OCI-LY7 (cell line): ENCODE measurements at regions of chr11 and their contacts with region 1.

Region 1: GRCh38 chr11:107565219-107565937 is at the start of gene ALKBH8:
- DNase-seq: peak; percentile 80
- H3K4me3 ChIP-seq: peak within 1 kb of the TSS; percentile 76
- H3K27ac ChIP-seq: peak within 1 kb of the TSS; percentile 86
- H3K4me1 ChIP-seq: peaks cover 49% of the 10 kb centered on the region
- CTCF ChIP-seq: no peak
- total RNA-seq, gene ALKBH8: 12.2 and 21.3 TPM in 2 replicates

Region 2: GRCh38 chr11:107549253-107549953 is 16.0 kb before region 1 on chr11:
- CTCF ChIA-PET with region 1: interaction called, 7 read pairs
- POLR2A ChIA-PET with region 1: interaction called, 32 read pairs
- intact Hi-C with region 1: no loop called
- DNase-seq: peak; percentile 61
- H3K4me3 ChIP-seq: no peak overlapping the region
- H3K27ac ChIP-seq: no peak overlapping the region
- H3K4me1 ChIP-seq: no peaks in the 10 kb centered on the region
- CTCF ChIP-seq: peak; percentile 96

Region 3: GRCh38 chr11:107689317-107690202 is 124.2 kb after region 1 on chr11:
- CTCF ChIA-PET with region 1: interaction called, 11 read pairs
- POLR2A ChIA-PET with region 1: interaction called, 6 read pairs
- intact Hi-C with region 1: loop called (anchors 1 kb)
- DNase-seq: peak; percentile 61
- H3K4me3 ChIP-seq: no peak overlapping the region
- H3K27ac ChIP-seq: no peak overlapping the region
- H3K4me1 ChIP-seq: no peaks in the 10 kb centered on the region
- CTCF ChIP-seq: peak; percentile 85

Region 4: GRCh38 chr11:107799218-107799859 is 234.0 kb after region 1 on chr11:
- CTCF ChIA-PET with region 1: no interaction called
- POLR2A ChIA-PET with region 1: no interaction called
- intact Hi-C with region 1: no loop called
- DNase-seq: peak; percentile 71
- H3K4me3 ChIP-seq: no peak overlapping the region
- H3K27ac ChIP-seq: no peak overlapping the region
- H3K4me1 ChIP-seq: no peaks in the 10 kb centered on the region
- CTCF ChIP-seq: peak; percentile 94

Region 5: DNA sequence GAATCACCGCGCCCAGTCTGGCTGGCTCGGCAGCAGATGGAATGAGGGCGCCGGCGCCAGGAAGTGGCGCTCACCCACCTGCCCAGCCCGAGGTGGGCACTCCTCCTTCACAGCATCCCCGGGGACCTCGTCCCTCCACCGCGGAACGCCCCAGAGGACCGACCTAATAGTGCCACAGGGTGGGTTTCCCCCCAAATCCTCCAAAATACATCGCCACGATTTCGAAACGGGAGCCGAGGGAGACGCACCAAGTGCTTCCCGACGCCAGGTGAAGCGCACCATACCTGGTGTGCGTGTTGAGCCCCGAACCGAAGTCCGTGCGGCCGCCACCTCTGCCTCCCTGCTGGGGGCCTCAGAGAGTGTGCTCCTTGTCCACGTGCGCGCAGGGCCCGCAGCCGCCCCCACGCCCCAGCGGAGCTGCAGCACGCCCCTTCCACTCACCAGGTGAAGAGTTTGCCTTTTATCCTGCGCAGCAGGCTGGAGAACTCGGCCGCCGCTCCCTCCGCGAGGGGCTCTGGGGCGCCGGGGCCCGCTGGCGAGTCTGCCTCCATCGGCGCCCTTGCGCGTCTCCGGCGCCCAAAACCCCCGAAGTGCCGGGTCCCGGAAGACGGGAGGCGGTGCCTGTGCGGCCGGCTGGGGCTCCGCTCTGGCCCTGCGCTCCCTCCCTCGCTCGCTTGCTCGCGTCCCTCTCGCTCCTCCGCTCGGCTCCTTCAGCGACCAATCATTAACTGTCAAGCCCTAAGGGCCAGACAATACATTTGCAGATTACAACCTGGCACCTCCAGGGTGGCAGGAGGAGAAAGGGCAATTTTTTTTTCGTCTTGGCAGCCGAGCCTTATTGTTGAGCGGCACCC is 293.1 kb after region 1 on chr11 and contains the start of gene SLC35F2:
- CTCF ChIA-PET with region 1: no interaction called
- POLR2A ChIA-PET with region 1: interaction called, 3 read pairs
- intact Hi-C with region 1: loop called (anchors 2 kb)
- DNase-seq: peak; percentile 91
- H3K4me3 ChIP-seq: peak within 1 kb of the TSS; percentile 85
- H3K27ac ChIP-seq: peak within 1 kb of the TSS; percentile 62
- H3K4me1 ChIP-seq: peaks cover 18% of the 10 kb centered on the region
- CTCF ChIP-seq: peak; percentile 54
- total RNA-seq, gene SLC35F2: 20.9 and 23.3 TPM in 2 replicates

Region 6: DNA sequence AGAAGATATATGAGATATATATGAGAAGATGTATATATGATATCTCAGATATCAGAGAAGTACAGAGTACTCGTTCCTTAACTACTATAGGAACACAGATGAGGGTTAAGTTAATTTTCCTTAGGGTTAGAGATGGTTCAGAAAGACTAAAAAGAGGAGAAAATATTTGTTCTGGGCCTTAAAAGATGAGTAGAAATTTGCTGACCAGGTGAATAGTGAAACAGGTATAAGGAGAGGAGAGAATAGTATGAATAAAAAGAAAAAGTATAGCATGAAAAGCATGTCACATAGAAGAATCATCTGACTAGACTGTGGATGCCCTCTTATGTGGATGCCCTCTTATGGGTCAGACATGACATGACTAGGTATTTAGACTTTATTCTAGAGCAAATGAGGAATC is 356.6 kb after region 1 on chr11:
- CTCF ChIA-PET with region 1: no interaction called
- POLR2A ChIA-PET with region 1: no interaction called
- intact Hi-C with region 1: no loop called
- DNase-seq: no peak
- H3K4me3 ChIP-seq: no peak overlapping the region
- H3K27ac ChIP-seq: no peak overlapping the region
- H3K4me1 ChIP-seq: no peaks in the 10 kb centered on the region
- CTCF ChIP-seq: no peak

Region 7: DNA sequence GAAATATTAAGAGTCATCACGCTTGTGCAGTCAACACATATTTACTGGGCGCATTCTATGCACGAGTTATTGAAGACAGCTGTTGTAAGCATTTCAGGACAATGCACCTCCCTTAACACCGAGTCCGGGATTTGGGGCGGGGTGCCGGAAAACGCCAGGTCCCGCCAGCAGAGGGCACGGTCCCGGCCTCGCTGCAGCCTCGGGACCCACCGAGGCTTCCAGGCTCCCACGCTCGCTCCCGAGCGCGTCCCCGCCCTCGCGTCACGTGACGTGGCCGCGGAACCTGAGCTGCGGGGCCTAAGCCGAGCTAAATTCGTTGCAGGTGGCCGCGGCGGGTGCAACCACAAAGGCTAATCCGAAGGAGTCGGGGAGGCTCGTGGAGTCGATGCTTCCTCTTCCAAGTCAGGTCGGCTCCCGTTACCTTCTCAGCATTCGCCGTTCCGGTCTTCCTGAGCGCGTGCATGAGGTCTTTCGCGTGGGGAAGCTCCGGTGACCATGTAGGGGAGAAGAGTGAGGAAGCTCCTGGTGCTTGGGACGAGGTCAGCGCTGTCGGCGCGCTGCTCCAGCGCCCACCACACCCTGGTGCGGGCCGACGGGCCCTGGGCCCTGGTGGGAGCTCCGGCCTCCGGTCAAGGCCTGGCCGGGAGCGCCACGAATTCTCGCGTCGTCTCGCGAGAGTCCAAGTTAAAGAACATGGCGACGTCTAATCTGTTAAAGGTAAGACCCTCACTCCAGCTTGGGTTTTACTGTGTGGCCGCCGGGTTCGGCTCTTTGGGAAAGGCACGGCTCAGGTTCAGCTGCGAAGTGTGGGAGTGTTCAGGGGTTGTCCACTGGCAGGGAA is 443.5 kb after region 1 on chr11 and contains the start of gene CUL5:
- CTCF ChIA-PET with region 1: interaction called, 7 read pairs
- POLR2A ChIA-PET with region 1: no interaction called
- intact Hi-C with region 1: loop called (anchors 2 kb)
- DNase-seq: peak; percentile 93
- H3K4me3 ChIP-seq: peak within 1 kb of the TSS; percentile 98
- H3K27ac ChIP-seq: peak within 1 kb of the TSS; percentile 80
- H3K4me1 ChIP-seq: peaks cover 26% of the 10 kb centered on the region
- CTCF ChIP-seq: peak; percentile 86
- total RNA-seq, gene CUL5: 18.8 and 20.1 TPM in 2 replicates